ENCODE measurements at regions of chr6 and their contacts with region 1.

Region 1: GRCh38 chr6:30227763-30228487 is 14.7 kb upstream of the TRIM26 start:
- DNase-seq: no peak
- H3K4me3 Mint-ChIP-seq: no peak overlapping the region
- H3K27ac Mint-ChIP-seq: peak overlapping the region; percentile 9
- H3K4me1 Mint-ChIP-seq: peaks cover 6% of the 10 kb centered on the region
- H3K27me3 Mint-ChIP-seq: peaks cover 16% of the 10 kb centered on the region

Region 2: DNA sequence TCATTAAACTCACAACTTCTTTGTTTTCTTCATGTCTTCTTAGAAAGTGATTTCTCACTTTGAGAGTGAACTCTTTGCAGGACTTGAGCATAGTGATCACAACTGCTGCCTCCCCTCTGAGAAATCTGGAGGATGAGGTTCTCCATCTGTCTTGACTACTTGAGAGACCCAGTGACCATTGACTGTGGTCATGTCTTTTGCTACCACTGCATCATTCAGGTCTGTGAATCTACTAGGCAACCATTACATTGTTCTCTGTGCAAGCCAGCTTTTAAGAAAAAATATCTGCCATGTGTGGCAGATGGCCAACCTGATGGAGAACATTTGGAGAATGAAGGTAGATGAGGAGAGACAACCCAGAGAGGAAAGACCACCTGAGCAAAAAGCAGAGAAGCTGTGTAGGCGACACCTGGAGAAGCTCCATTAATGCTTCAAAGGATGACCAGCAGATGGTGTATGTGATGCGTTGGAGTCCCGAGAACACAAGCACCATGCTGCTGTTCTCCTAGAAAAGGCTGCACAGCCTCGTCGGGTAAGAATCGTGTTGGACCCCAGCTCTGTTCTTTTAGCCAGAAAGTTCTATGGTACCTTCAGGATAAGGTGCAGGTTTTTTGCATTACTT is 10.4 kb after region 1 on chr6:
- CTCF ChIA-PET with region 1: interaction called, 13 read pairs
- POLR2A ChIA-PET with region 1: no interaction called
- DNase-seq: no peak
- H3K4me3 Mint-ChIP-seq: no peak overlapping the region
- H3K27ac Mint-ChIP-seq: no peak overlapping the region
- H3K4me1 Mint-ChIP-seq: no peaks in the 10 kb centered on the region
- H3K27me3 Mint-ChIP-seq: peaks cover 36% of the 10 kb centered on the region

Region 3: DNA sequence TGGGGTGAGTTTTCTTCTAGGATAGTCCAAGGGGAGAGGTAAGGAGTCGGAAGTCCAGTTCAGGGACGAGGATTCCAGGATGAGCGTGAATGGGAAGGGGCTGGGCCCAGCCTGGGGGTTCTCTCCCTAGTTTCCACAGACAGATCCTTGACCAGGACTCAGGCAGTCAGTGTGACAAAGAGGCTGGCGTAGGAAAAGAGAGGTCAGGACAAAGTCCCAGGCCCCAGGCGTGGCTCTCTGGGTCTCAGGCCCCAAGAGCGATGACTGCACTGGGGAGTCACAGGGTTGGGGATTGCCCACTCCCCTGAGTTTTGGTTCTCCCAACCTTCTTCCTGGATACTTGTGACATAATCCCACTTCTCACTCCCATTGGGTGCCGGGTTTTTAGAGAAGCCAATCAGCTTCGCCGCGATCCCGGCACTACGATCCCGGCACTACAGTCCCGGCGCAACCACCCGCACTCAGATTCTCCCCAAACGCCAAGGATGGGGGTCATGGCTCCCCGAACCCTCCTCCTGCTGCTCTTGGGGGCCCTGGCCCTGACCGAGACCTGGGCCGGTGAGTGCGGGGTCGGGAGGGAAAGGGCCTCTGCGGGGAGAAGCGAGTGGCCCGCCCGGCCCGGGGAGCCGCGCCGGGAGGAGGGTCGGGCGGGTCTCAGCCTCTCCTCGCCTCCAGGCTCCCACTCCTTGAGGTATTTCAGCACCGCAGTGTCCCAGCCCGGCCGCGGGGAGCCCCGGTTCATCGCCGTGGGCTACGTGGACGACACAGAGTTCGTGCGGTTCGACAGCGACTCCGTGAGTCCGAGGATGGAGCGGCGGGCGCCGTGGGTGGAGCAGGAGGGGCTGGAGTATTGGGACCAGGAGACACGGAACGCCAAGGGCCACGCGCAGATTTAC is 31.5 kb after region 1 on chr6:
- CTCF ChIA-PET with region 1: no interaction called
- POLR2A ChIA-PET with region 1: no interaction called
- DNase-seq: peak; percentile 73
- H3K4me3 Mint-ChIP-seq: peak overlapping the region; percentile 89
- H3K27ac Mint-ChIP-seq: peak overlapping the region; percentile 57
- H3K4me1 Mint-ChIP-seq: peaks cover 16% of the 10 kb centered on the region
- H3K27me3 Mint-ChIP-seq: peaks cover 11% of the 10 kb centered on the region

Measured in activated CD4-positive, alpha-beta memory T cell treated with anti-CD3 and anti-CD28 coated beads, Interleukin-2, amount 10 ng/mL, durations not matched to agents 7 days and 5 days (primary cell).